ENCODE measurements at regions of chr20 and their contacts with region 1.

Region 1: GRCh38 chr20:31674895-31675827 is 37.4 kb downstream of the COX4I2 start:
- DNase-seq: peak; percentile 84
- H3K27ac ChIP-seq: peak overlapping the region; percentile 77
- CTCF ChIP-seq: no peak

Region 2: DNA sequence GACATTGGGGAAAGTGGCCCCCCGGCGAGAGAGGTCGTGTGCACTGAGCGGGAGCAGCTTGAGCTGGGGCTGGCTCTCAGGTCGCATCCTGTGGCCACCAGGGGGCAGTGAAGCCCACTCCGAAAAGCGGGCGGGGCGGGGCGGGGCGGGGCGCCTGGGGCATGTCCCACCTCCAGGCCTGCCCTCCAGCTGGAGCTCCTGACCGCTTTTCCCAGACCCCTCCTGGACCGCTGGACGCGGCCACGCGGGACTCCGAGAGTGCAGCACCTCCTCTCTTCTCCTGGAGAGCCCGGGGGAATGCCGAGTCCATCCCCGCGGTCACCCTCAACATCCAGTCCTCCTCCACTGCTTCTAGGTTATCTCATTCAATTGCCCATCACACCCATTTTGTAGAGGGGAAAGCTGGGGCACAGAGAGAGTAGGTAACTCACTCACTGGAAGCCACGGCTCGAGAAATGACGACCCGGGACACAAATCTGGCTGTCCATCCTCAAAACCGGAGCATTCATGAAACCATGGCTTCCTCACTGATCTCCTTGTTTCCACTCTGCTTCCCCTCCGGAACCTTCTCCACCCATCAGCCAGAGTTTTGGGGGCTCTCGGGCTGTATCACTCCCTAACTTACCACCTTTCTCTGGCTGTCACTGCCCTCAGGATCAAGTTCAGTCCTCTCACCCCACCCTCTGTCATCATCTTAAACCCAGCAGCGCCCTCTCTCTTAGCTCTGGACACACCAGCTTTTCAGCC is 13.4 kb before region 1 on chr20:
- CTCF ChIA-PET with region 1: interaction called, 18 read pairs
- POLR2A ChIA-PET with region 1: no interaction called
- DNase-seq: peak; percentile 89
- H3K27ac ChIP-seq: peak overlapping the region; percentile 71
- CTCF ChIP-seq: peak; percentile 93

Measured in RWPE1 (cell line).